HEK293 (cell line): ENCODE measurements at regions of chr16 and their contacts with region 1.

Region 1: DNA sequence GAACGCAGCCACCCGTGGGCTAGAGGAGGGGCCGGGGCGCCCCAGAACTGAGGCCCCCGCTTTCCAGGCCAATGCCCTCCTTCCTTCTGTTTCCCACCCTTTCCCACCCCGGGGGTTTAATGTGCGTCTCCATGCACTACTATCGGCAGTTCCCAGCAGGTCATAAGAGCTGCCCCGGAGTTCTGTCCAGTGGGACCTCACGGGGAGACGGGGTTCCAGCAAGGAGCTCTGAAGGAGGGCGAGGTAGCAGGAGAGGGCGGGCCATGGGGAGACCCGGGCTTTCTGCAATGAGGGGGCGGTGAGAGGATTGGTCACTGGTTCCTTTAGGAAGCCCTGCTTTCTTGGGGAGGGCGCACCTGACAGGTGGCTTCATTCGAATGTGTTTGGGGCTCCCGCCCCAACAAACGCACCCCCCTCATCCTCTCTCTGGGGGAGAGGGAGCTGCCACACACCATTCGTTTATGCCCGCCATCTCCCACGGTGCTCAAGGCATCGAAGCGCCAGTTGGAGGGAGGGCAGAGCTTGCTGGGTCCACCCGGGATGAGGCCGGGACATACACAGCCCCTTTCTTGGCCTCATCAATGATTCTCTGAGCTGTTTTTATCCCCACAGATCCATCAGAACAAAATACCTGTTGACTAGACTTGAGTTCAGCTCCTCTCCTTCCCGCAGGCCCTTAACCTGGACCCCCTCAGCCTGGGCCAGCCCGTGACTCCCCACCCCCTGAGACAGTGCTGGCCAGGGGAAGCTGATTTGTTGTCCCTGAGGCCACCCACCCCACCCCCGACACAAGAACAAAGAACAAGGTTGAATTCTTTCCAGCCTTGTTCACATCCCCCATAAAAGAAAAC is 44.1 kb downstream of the SLC7A5 start:
- H3K4me3 ChIP-seq: no peak overlapping the region
- H3K27ac ChIP-seq: no peak overlapping the region
- H3K4me1 ChIP-seq: no peaks in the 10 kb centered on the region
- CTCF ChIP-seq: no peak

Region 2: DNA sequence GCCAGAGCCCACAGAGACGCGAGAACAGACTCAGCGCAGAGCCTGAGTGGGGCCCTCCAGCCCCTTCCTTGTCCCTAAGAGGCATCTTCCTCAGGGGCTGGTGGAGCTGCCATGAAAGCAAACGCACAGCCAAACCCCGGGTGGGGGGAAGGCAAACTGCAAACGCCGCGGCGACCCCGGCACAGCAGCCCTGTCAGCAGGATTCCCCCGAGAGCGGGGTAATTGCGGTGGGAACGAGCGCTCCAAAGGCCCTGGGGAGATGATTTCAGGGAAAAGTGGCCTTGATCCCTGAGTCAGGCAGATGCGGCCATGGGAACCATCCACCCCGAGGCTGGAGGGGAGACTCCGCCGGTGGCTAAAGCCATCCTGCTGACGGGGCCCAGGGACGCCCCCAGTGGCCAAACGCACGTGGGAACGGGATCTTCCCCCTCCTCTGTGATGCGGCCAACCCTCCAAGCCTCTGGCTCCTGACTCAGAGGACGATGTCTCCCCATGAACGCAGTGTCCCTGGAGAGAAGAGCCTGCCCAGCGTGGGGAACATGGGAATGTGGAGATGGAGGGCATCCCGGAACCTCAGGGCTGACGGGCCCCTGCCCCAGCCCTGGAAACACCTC is 19.0 kb after region 1 on chr16:
- CTCF ChIA-PET with region 1: interaction called, 7 read pairs
- POLR2A ChIA-PET with region 1: interaction called, 11 read pairs
- H3K4me3 ChIP-seq: no peak overlapping the region
- H3K27ac ChIP-seq: no peak overlapping the region
- H3K4me1 ChIP-seq: no peaks in the 10 kb centered on the region
- CTCF ChIP-seq: peak; percentile 23; the same call in 1 of the 2 replicates

Region 3: GRCh38 chr16:88005181-88005581 is 180.0 kb after region 1 on chr16:
- CTCF ChIA-PET with region 1: no interaction called
- POLR2A ChIA-PET with region 1: no interaction called
- H3K4me3 ChIP-seq: no peak overlapping the region
- H3K27ac ChIP-seq: no peak overlapping the region
- H3K4me1 ChIP-seq: no peaks in the 10 kb centered on the region
- CTCF ChIP-seq: no peak